ENCODE measurements at regions of chr3 and their contacts with region 1.

Region 1: GRCh38 chr3:134600685-134601463 is 49.9 kb downstream of the KY start:
- DNase-seq: peak; percentile 78
- ATAC-seq: peak; percentile 88

Region 2: DNA sequence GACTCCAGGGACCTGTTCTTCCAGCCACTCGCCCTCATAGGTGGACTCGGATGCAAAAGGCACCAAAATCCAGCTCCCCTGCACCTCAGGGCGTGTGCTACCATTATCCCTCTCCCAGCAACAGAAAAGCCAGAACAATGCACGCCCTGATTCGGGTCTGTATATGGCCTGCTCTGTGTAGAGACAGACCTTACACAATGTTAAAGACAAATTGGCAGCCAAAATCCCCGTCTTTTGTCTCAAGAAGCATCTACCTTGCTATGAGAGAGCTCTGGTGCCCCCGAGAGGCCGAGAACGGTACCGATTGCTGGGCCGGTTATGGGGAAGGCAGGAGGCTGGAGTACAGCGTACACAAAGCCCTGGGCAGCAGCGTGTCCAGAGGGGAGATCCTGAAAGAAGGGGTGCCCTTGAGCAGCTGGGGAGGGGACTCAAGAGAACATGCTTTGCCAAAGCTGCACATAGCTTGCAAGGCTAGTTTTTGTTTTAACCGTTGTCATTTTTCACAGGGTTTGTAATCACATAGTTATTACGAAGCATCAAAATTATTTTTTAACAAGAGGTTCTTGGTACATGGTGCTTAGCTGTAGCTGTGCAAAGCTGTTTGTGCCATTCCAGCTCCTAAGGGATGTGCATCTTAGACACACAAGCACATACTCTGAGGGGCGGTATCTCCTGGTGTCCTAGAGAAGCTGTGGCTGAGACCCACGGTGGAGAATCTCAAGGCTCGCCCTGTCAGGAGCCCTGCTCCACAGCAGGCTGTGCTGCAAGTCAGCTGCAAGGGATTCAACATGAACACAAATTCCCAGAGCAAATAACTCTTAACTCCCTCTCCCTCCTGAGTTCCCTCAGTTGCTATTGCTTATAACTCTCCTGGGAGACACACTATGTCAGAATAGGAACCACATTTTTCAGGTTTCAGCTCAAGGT is 903.1 kb after region 1 on chr3:
- intact Hi-C with region 1: loop called (anchors 10 kb)
- DNase-seq: peak; percentile 79
- ATAC-seq: peak; percentile 86

Measured in Right ventricle myocardium superior (tissue), 1 donor.